B cell (primary cell): ENCODE measurements at regions of chr19 and their contacts with region 1.

Region 1: GRCh38 chr19:11380653-11381534 is 3.2 kb downstream of the EPOR start:
- DNase-seq: peak; percentile 99
- ATAC-seq: peak; percentile 82
- H3K4me3 ChIP-seq: peak overlapping the region; percentile 51 to 65 (median 60)
- H3K4me3 Mint-ChIP-seq: peak overlapping the region; percentile 94
- H3K27ac ChIP-seq: peak overlapping the region; percentile 87 to 93
- H3K27ac Mint-ChIP-seq: peak overlapping the region; percentile 95
- H3K4me1 ChIP-seq: peaks cover 46 to 57% of the 10 kb centered on the region in 2 donors
- H3K4me1 Mint-ChIP-seq: peaks cover 48% of the 10 kb centered on the region
- H3K27me3 ChIP-seq: peaks cover 0 to 6% (median 2%) of the 10 kb centered on the region in 4 experiments
- H3K27me3 Mint-ChIP-seq: no peaks in the 10 kb centered on the region
- CTCF ChIP-seq: peak; percentile 89

Region 2: DNA sequence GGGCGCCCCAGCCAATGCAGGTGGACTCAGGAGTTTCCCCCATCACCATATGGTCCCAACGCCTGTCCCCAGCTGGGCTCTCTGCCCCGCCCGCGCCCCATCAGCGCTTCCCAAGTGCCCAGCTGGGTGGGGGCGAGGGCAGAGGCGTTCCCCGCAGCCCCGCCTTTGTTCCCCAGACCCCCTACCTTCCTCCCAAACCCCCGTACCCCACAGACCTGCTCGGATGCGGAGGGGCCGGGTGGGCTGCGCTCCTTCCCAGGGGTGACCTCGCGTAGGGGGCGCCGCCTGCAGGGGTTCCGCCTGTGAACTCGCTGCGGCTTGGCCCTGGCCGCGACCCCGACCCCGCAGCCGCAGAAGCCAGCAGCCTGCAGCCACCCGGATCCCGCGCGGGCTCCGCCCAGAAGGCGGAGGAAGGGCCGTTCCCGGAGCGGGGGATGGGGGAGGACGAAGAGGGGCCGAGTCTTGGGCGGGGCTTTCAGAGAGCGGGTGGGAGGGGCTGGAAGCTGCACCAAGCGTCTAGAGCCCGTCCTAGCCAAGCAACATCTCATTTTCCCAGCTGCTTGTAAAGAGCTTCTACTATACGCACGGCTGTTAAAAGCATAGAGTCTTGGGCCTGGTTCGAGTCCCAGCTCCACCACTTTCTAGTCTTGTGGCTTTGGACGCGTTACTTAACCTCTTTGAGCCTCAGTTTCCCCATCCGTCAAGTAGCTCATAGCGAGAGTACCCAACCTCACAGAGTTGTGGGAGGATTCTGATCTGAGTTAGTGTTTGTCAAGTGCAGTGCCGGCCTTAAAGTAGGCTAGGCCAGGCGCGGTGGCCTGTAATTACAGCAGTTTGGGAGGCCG is 41.4 kb before region 1 on chr19 and contains the start of gene RAB3D:
- CTCF ChIA-PET with region 1: interaction called, 10 read pairs
- POLR2A ChIA-PET with region 1: interaction called, 8 read pairs
- intact Hi-C with region 1: no loop called
- DNase-seq: peak; percentile 82
- ATAC-seq: peak; percentile 99
- H3K4me3 ChIP-seq: peak within 1 kb of the TSS; percentile 55 to 65 (median 58)
- H3K4me3 Mint-ChIP-seq: peak within 1 kb of the TSS; percentile 81
- H3K27ac ChIP-seq: peak within 1 kb of the TSS in 1 of 2 donors; percentile 15
- H3K27ac Mint-ChIP-seq: peak within 1 kb of the TSS; percentile 61
- H3K4me1 ChIP-seq: peaks cover 10 to 17% of the 10 kb centered on the region in 2 donors
- H3K4me1 Mint-ChIP-seq: peaks cover 25% of the 10 kb centered on the region
- H3K27me3 ChIP-seq: no peaks in the 10 kb centered on the region
- H3K27me3 Mint-ChIP-seq: no peaks in the 10 kb centered on the region
- CTCF ChIP-seq: no peak
- total RNA-seq, gene RAB3D: 8.9 TPM in 2 replicates

Region 3: DNA sequence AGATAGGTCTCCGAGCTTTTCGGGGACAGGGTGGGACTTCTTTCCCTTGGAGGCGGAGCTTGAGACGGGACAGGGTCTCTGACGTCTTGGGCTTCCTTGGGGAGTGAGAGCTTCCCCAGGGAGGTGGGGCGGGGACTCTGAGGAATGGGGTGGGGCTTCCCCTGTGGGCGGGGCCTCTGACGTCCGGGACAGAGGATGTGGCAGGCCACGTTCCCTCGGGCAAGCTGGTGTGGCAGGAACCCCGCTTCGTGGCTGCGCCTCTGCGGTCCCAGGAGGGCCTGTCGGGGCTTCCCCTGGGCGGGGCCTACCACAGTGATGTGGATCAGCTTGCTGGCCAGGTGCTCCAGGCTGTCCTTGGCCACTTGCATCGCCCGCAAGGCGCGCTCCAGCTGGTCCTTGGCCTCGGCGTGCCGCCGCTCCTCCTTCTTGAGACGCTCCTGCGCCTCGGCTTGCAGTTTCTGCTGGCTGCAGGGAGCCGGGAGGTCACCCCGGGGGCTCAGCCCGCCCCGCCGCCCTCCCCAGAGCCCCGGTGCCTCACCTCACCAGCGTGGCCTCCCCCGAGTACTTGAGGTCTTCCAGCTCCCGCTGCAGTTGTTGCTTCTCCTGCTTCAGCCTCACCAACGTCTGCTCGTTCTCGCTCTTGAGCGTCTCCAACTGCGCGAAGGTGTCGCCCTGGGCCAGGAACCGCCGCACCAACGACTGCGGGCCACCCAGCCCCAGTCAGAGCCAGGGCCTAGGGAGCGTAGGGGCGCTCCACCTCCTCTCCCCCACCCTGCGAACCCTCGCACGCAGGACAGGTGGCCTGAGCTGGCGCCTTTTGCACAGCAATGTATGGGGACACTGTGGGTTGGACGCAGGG is 41.5 kb after region 1 on chr19:
- CTCF ChIA-PET with region 1: interaction called, 41 read pairs
- POLR2A ChIA-PET with region 1: interaction called, 16 read pairs
- intact Hi-C with region 1: loop called (anchors 1 kb)
- DNase-seq: peak; percentile 92
- ATAC-seq: peak; percentile 85
- H3K4me3 ChIP-seq: peak overlapping the region in 4 of 5 experiments; percentile 40 to 57 (median 46)
- H3K4me3 Mint-ChIP-seq: peak overlapping the region; percentile 84
- H3K27ac ChIP-seq: peak overlapping the region in 1 of 2 donors; percentile 52
- H3K27ac Mint-ChIP-seq: peak overlapping the region; percentile 58
- H3K4me1 ChIP-seq: peaks cover 55 to 61% of the 10 kb centered on the region in 2 donors
- H3K4me1 Mint-ChIP-seq: peaks cover 52% of the 10 kb centered on the region
- H3K27me3 ChIP-seq: peaks cover 0 to 50% (median 24%) of the 10 kb centered on the region in 4 experiments
- H3K27me3 Mint-ChIP-seq: peaks cover 18% of the 10 kb centered on the region
- CTCF ChIP-seq: no peak

Region 4: DNA sequence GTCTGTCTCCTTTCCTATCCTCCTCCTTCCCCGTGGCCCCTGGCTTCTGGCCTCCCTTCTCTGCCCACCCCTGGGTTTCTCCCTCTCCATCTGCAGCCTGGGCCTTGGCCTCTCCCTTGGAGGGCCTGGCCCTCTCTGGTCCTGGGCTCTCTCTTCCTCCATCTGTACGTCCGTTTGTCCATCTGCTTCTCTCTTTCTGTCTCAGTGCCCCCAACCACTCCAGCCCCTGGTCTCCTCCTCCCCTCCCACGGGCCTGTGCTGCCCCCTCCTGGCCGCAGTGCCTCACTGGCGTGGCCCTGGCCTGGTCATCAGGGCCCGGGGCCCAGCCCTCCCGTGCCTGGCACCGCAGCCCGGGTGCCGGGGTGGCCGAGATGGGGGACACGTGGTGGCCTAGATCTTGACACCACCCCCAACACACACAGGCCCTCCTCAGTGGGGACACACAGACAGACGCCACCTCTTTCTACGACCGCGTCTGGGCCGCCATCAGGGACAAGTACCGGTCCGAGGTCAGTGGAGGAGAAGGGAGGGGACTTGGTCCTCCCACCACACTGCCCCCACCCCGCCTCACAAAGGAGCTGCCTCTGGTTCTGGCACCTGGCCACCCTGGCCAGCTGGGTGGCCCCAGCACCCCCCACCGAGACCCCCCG is 65.9 kb after region 1 on chr19:
- CTCF ChIA-PET with region 1: interaction called, 27 read pairs
- POLR2A ChIA-PET with region 1: no interaction called
- intact Hi-C with region 1: no loop called
- DNase-seq: peak; percentile 69
- ATAC-seq: peak; percentile 76
- H3K4me3 ChIP-seq: no peak overlapping the region
- H3K4me3 Mint-ChIP-seq: no peak overlapping the region
- H3K27ac ChIP-seq: no peak overlapping the region
- H3K27ac Mint-ChIP-seq: no peak overlapping the region
- H3K4me1 ChIP-seq: no peaks in the 10 kb centered on the region
- H3K4me1 Mint-ChIP-seq: no peaks in the 10 kb centered on the region
- H3K27me3 ChIP-seq: no peaks in the 10 kb centered on the region
- H3K27me3 Mint-ChIP-seq: no peaks in the 10 kb centered on the region
- CTCF ChIP-seq: peak; percentile 77

Region 5: GRCh38 chr19:11496391-11497163 is 115.7 kb after region 1 on chr19:
- CTCF ChIA-PET with region 1: no interaction called
- POLR2A ChIA-PET with region 1: no interaction called
- intact Hi-C with region 1: no loop called
- DNase-seq: peak; percentile 67
- ATAC-seq: peak; percentile 72
- H3K4me3 ChIP-seq: no peak overlapping the region
- H3K4me3 Mint-ChIP-seq: no peak overlapping the region
- H3K27ac ChIP-seq: no peak overlapping the region
- H3K27ac Mint-ChIP-seq: no peak overlapping the region
- H3K4me1 ChIP-seq: no peaks in the 10 kb centered on the region
- H3K4me1 Mint-ChIP-seq: no peaks in the 10 kb centered on the region
- H3K27me3 ChIP-seq: no peaks in the 10 kb centered on the region
- H3K27me3 Mint-ChIP-seq: no peaks in the 10 kb centered on the region
- CTCF ChIP-seq: peak; percentile 70

Region 6: GRCh38 chr19:11587302-11587974 is 206.5 kb after region 1 on chr19:
- CTCF ChIA-PET with region 1: interaction called, 7 read pairs
- POLR2A ChIA-PET with region 1: no interaction called
- intact Hi-C with region 1: loop called (anchors 1 kb)
- DNase-seq: peak; percentile 88
- ATAC-seq: peak; percentile 75
- H3K4me3 ChIP-seq: no peak overlapping the region
- H3K4me3 Mint-ChIP-seq: no peak overlapping the region
- H3K27ac ChIP-seq: no peak overlapping the region
- H3K27ac Mint-ChIP-seq: peak overlapping the region; percentile 32
- H3K4me1 ChIP-seq: peaks cover 34 to 51% of the 10 kb centered on the region in 2 donors
- H3K4me1 Mint-ChIP-seq: peaks cover 39% of the 10 kb centered on the region
- H3K27me3 ChIP-seq: no peaks in the 10 kb centered on the region
- H3K27me3 Mint-ChIP-seq: no peaks in the 10 kb centered on the region
- CTCF ChIP-seq: peak; percentile 82